ENCODE measurements at regions of chr11 and their contacts with region 1.

Region 1: DNA sequence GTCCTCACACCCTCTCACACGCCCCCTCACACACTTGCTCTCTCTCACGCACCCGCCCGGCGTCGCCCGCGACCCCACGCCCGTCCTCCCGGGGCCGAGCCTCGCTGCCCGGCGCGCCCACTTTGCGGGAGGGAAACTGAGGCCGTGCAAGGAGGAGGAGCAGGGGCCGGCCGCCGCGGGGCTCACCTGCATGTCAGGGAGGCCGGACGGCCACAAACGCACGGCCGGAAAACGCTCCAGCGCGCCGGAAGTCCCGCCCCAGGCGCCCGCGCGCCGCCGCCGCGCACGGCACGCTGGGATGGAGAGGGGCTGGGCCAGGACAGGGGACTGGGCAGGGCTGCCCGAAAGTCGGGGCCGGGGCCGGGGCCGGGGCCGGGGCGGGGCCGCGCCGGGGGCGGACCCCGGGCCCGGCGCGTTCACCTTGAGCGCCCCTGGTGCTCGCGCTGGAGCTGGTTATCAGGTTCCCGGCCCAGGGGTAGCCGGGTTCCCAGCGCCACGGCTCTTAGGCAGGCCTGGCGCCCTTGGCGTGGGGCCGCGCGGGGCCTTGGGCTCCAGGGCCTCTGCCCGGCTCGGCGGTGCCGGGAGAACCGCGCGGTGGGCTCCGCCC is at the start of gene CHID1:
- DNase-seq: peak; percentile 95

Region 2: GRCh38 chr11:795634-796564 is 114.8 kb before region 1 on chr11:
- CTCF ChIA-PET with region 1: no interaction called
- POLR2A ChIA-PET with region 1: no interaction called
- DNase-seq: no peak

Region 3: GRCh38 chr11:921921-922678 is 11.4 kb after region 1 on chr11:
- CTCF ChIA-PET with region 1: no interaction called
- POLR2A ChIA-PET with region 1: interaction called, 17 read pairs
- DNase-seq: no peak

Measured in HEK293T (cell line).